H1 (cell line): ENCODE measurements at regions of chr18 and their contacts with region 1.

Region 1: GRCh38 chr18:24543805-24544498 is 83.5 kb downstream of the HRH4 start:
- DNase-seq: no peak
- H3K4me3 ChIP-seq: no peak overlapping the region
- H3K27ac ChIP-seq: no peak overlapping the region
- H3K4me1 ChIP-seq: no peaks in the 10 kb centered on the region
- H3K27me3 ChIP-seq: no peaks in the 10 kb centered on the region
- CTCF ChIP-seq: peak in 2 of 3 experiments; percentile 49 to 59; a peak in 3 of 4 replicates
- EP300 ChIP-seq: no peak
- POLR2A ChIP-seq: no peak
- RAD21 ChIP-seq: peak; percentile 86 to 88

Region 2: GRCh38 chr18:24530630-24531111 is 13.3 kb before region 1 on chr18:
- CTCF ChIA-PET with region 1: interaction called, 10 read pairs
- POLR2A ChIA-PET with region 1: no interaction called
- DNase-seq: no peak
- H3K4me3 ChIP-seq: no peak overlapping the region
- H3K27ac ChIP-seq: no peak overlapping the region
- H3K4me1 ChIP-seq: no peaks in the 10 kb centered on the region
- H3K27me3 ChIP-seq: no peaks in the 10 kb centered on the region
- CTCF ChIP-seq: no peak
- EP300 ChIP-seq: no peak
- POLR2A ChIP-seq: no peak
- RAD21 ChIP-seq: no peak

Region 3: GRCh38 chr18:24559526-24559925 is 15.6 kb after region 1 on chr18:
- CTCF ChIA-PET with region 1: interaction called, 17 read pairs
- POLR2A ChIA-PET with region 1: no interaction called
- DNase-seq: no peak
- H3K4me3 ChIP-seq: no peak overlapping the region
- H3K27ac ChIP-seq: no peak overlapping the region
- H3K4me1 ChIP-seq: peaks cover 0 to 14% (median 6%) of the 10 kb centered on the region in 4 experiments; a peak in 5 of 7 replicates
- H3K27me3 ChIP-seq: no peaks in the 10 kb centered on the region
- CTCF ChIP-seq: no peak
- EP300 ChIP-seq: no peak
- POLR2A ChIP-seq: no peak
- RAD21 ChIP-seq: no peak

Region 4: GRCh38 chr18:24600076-24600654 is 56.2 kb after region 1 on chr18:
- CTCF ChIA-PET with region 1: interaction called, 65 read pairs
- POLR2A ChIA-PET with region 1: no interaction called
- DNase-seq: no peak
- H3K4me3 ChIP-seq: no peak overlapping the region
- H3K27ac ChIP-seq: no peak overlapping the region
- H3K4me1 ChIP-seq: peaks cover 0 to 7% (median 5%) of the 10 kb centered on the region in 4 experiments; a peak in 5 of 7 replicates
- H3K27me3 ChIP-seq: no peaks in the 10 kb centered on the region
- CTCF ChIP-seq: peak in 2 of 3 experiments; percentile 60 to 61; a peak in 2 of 4 replicates
- EP300 ChIP-seq: no peak
- POLR2A ChIP-seq: no peak
- RAD21 ChIP-seq: peak; percentile 79 to 80

Region 5: DNA sequence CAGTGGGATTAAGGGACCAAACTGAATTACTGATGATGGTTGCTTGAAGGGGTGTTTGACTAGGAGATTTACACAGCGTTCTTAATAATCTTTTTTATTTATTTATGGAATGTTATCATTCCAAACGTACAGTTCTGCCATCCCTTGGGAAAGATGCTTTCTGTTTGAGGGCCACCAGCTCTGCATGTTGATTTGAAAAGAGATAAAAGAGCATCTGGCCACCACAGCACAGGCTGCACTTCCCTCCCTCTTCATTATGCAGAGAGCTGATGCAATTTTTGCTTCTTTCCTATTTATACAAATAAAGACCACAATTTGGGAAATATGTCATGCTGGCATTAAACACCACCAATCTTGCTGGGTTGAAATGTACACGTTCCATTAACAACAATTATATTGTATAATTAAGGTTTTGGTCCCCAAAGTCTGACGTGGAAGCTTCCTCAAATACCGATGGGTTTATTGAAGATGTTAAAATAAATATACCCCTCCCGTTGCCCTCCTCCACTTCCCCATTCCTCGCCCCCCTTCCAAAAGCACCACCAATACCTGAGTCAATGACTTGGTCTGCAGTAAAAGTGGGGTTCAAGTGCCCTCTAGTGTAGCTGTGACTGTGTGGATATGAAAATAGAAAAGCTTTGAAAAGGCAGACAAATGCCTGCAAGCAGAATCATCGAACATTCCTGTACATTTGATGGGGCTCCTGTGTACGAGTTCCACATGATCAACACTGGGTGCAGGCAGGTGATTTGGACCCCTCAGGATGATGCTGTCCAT is 128.4 kb after region 1 on chr18:
- CTCF ChIA-PET with region 1: interaction called, 15 read pairs
- POLR2A ChIA-PET with region 1: no interaction called
- DNase-seq: no peak
- H3K4me3 ChIP-seq: no peak overlapping the region
- H3K27ac ChIP-seq: no peak overlapping the region
- H3K4me1 ChIP-seq: no peaks in the 10 kb centered on the region
- H3K27me3 ChIP-seq: no peaks in the 10 kb centered on the region; a peak in 1 of 7 replicates
- CTCF ChIP-seq: peak in 2 of 3 experiments; percentile 27 to 50; a peak in 2 of 4 replicates
- EP300 ChIP-seq: no peak
- POLR2A ChIP-seq: no peak
- RAD21 ChIP-seq: peak; percentile 68 to 75

Region 6: GRCh38 chr18:24726727-24727492 is 183.0 kb after region 1 on chr18:
- CTCF ChIA-PET with region 1: interaction called, 172 read pairs
- POLR2A ChIA-PET with region 1: no interaction called
- DNase-seq: peak in 1 of 2 experiments; percentile 71
- H3K4me3 ChIP-seq: no peak overlapping the region
- H3K27ac ChIP-seq: no peak overlapping the region
- H3K4me1 ChIP-seq: no peaks in the 10 kb centered on the region; a peak in 1 of 7 replicates
- H3K27me3 ChIP-seq: no peaks in the 10 kb centered on the region
- CTCF ChIP-seq: peak; percentile 50 to 85 (median 80)
- EP300 ChIP-seq: no peak
- POLR2A ChIP-seq: no peak
- RAD21 ChIP-seq: peak; percentile 93 to 95